ENCODE measurements at regions of chr1 and their contacts with region 1.

Region 1: GRCh38 chr1:11784993-11785769 is 20.6 kb downstream of the MTHFR start:
- DNase-seq: peak; percentile 93
- H3K4me3 ChIP-seq: peak overlapping the region in 1 of 2 experiments; percentile 35; a peak in 1 of 4 replicates
- H3K27ac ChIP-seq: no peak overlapping the region; a peak in 1 of 4 replicates
- H3K4me1 ChIP-seq: peaks cover 0 to 24% of the 10 kb centered on the region in 2 experiments; a peak in 1 of 4 replicates
- H3K27me3 ChIP-seq: no peaks in the 10 kb centered on the region
- CTCF ChIP-seq: peak; percentile 81
- EP300 ChIP-seq: no peak
- RAD21 ChIP-seq: peak; percentile 51

Region 2: GRCh38 chr1:11772458-11772857 is 12.7 kb before region 1 on chr1:
- CTCF ChIA-PET with region 1: interaction called, 21 read pairs
- POLR2A ChIA-PET with region 1: no interaction called
- DNase-seq: no peak
- H3K4me3 ChIP-seq: no peak overlapping the region
- H3K27ac ChIP-seq: no peak overlapping the region
- H3K4me1 ChIP-seq: peaks cover 0 to 6% of the 10 kb centered on the region in 2 experiments; a peak in 1 of 4 replicates
- H3K27me3 ChIP-seq: no peaks in the 10 kb centered on the region
- CTCF ChIP-seq: no peak
- EP300 ChIP-seq: no peak
- RAD21 ChIP-seq: no peak

Region 3: GRCh38 chr1:11797525-11798216 is 12.5 kb after region 1 on chr1:
- CTCF ChIA-PET with region 1: interaction called, 35 read pairs
- POLR2A ChIA-PET with region 1: interaction called, 8 read pairs
- DNase-seq: no peak
- H3K4me3 ChIP-seq: no peak overlapping the region
- H3K27ac ChIP-seq: no peak overlapping the region
- H3K4me1 ChIP-seq: peaks cover 0 to 2% of the 10 kb centered on the region in 2 experiments; a peak in 1 of 4 replicates
- H3K27me3 ChIP-seq: no peaks in the 10 kb centered on the region
- CTCF ChIP-seq: no peak
- EP300 ChIP-seq: no peak
- RAD21 ChIP-seq: no peak

Region 4: DNA sequence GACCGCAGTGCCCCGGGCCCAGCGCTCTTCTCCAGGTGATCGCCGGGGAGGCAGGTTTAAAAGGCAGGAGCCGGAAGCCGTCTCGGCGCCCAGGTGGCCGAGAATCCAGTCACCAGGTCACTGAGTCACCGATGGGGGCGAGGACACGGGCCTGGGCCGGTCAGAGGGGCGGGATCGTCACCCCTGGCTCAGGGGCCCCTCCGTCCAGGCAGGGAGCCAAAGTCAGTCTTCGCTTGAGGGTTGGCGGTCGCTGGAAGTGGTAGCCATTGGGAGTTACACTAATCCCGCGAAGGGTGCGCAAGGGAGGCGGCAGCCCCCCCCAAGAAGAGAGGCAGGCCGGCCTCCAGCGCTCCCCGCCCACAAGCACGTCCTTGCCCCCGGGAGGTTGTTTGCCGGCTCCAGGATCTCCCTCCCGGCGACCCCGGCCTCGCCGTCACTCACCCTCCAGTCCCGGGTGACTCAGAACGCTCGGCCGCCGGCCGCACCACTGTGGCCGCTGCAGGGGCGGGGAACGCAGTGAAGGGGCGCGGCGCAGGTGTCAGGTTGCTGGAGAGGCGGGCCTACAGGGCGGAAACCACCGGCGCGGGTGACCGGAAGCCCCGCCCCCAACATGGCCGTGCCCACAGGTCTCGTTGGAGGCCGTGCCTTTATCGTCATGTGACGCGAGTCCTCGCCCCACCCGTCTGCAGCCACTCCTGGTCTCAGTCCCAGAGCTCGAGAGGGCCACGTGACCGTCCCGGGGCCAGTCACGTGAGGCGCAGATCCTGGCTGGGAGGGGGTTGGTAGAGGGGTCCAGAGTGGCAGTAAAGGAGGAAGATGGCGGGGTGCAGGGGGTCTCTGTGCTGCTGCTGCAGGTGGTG is 20.5 kb after region 1 on chr1 and contains the starts of genes CLCN6 and MTHFR:
- CTCF ChIA-PET with region 1: interaction called, 14 read pairs
- POLR2A ChIA-PET with region 1: interaction called, 8 read pairs
- DNase-seq: peak; percentile 99
- H3K4me3 ChIP-seq: peak within 1 kb of the TSS; percentile 87 to 96
- H3K27ac ChIP-seq: peak within 1 kb of the TSS; percentile 79 to 91
- H3K4me1 ChIP-seq: peaks cover 34 to 35% of the 10 kb centered on the region in 2 experiments; a peak in 3 of 4 replicates
- H3K27me3 ChIP-seq: no peaks in the 10 kb centered on the region
- CTCF ChIP-seq: no peak
- EP300 ChIP-seq: no peak
- RAD21 ChIP-seq: no peak
- polyA plus RNA-seq, gene CLCN6: 7.4 and 8.3 TPM in 2 replicates
- polyA plus RNA-seq, gene MTHFR: 5.3 and 7.6 TPM in 2 replicates

Measured in SK-N-SH (cell line).